A549 (cell line): ENCODE measurements at regions of chr11 and their contacts with region 1.

Region 1: GRCh38 chr11:3854977-3855807 is at the start of gene STIM1:
- DNase-seq: peak; percentile 82 to 94
- ATAC-seq: peak; percentile 86 to 91
- H3K4me3 ChIP-seq: peak within 1 kb of the TSS; percentile 98
- H3K27ac ChIP-seq: peak within 1 kb of the TSS; percentile 98 to 99
- H3K4me1 ChIP-seq: peaks cover 49% of the 10 kb centered on the region
- CTCF ChIP-seq: peak; percentile 91
- EP300 ChIP-seq: no peak
- POLR2A ChIP-seq: peak; percentile 69
- RAD21 ChIP-seq: peak; percentile 73 to 85
- polyA plus RNA-seq, gene STIM1: 38.7 and 42.5 TPM in 2 replicates

Region 2: DNA sequence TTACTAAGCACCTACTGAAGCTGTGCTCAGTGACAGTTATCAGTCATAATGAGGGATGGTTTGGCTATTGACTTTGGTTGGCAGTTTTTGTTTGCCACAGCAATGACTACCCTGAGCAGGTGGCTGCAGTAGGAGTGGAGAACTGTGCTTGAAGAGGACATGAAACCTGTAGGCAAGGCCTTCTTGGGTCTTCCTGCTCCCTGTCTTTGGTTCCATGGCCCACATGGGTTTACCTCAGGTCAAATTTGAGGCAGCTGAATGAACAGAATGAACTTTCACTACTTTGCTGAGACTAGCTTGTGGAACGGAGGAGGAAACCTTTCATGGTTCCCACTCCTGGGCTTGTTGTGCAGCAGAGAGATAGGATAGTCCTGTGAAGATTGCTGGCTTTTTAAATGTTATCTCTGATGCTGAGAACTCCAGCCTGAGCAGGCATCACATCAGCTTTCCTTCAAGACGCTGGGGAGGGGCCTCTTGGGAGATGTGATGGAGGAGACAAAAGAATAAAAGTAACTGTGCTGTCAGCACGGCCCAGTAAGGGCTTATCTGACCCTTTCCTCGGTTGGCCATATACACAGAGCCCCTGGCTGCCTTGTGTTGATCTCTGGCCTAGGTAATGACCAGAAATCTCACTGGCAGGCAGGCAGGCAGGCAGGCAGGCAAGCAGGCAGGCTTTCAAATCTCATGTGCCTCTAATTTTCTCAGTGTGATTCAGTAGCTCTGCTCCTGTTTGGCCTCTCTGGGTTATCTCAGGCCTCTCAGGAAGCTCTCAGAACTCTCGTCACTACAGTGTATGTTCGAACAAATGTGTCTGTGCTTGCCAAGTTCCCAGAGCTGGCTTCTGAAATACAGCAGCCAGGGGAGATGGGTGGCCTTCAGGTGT is 12.3 kb after region 1 on chr11:
- CTCF ChIA-PET with region 1: interaction called, 46 read pairs
- POLR2A ChIA-PET with region 1: interaction called, 4 read pairs
- DNase-seq: no peak
- ATAC-seq: no peak
- H3K4me3 ChIP-seq: no peak overlapping the region
- H3K27ac ChIP-seq: no peak overlapping the region; a peak in 1 of 6 replicates
- H3K4me1 ChIP-seq: peaks cover 15% of the 10 kb centered on the region
- CTCF ChIP-seq: no peak
- EP300 ChIP-seq: no peak
- POLR2A ChIP-seq: no peak
- RAD21 ChIP-seq: no peak

Region 3: DNA sequence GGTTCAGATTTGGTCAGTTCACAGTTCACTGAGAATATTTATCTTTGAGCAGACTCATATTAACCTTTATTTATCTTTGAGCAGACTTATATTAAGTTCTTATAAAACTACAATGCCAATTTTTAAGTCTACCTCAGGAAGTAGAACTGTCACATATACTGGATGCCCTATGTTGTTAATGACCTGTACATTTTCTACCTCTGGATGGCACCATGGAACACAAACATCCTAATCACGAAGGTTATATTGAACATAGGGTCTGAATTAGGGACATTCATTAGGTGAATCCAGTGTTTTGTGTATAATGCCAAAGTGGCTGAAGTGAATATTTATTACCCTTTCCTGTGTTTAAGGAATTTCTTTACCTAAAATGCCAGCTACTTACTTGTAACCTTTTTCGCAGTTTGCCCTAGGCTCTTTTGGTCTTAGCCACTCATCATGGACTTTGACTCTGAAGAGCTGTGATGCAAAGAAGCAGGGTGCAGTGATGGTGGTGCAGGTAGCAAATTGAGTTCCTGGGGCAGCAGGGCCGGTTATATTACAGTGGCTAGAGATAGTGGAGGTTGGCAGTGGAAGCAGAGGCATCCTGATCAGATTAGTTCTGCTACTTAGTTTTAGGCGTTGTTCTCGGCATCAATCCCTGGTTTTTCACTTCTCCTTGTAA is 72.1 kb after region 1 on chr11:
- CTCF ChIA-PET with region 1: interaction called, 12 read pairs
- POLR2A ChIA-PET with region 1: no interaction called
- DNase-seq: no peak
- ATAC-seq: peak in 1 of 2 experiments; percentile 39; a peak in 1 of 6 replicates
- H3K4me3 ChIP-seq: no peak overlapping the region
- H3K27ac ChIP-seq: no peak overlapping the region
- H3K4me1 ChIP-seq: peaks cover 9% of the 10 kb centered on the region; the same call in 2 of the 3 replicates
- CTCF ChIP-seq: 0 out of 3 replicates have a peak, but pooled peaks have one; percentile 9
- EP300 ChIP-seq: no peak
- POLR2A ChIP-seq: no peak
- RAD21 ChIP-seq: no peak; a peak in 1 of 5 replicates

Region 4: GRCh38 chr11:3969613-3970012 is 114.4 kb after region 1 on chr11:
- CTCF ChIA-PET with region 1: interaction called, 29 read pairs
- POLR2A ChIA-PET with region 1: interaction called, 3 read pairs
- DNase-seq: no peak
- ATAC-seq: no peak
- H3K4me3 ChIP-seq: no peak overlapping the region
- H3K27ac ChIP-seq: no peak overlapping the region
- H3K4me1 ChIP-seq: no peaks in the 10 kb centered on the region
- CTCF ChIP-seq: no peak
- EP300 ChIP-seq: no peak
- POLR2A ChIP-seq: no peak
- RAD21 ChIP-seq: no peak

Region 5: GRCh38 chr11:4072668-4073285 is 217.6 kb after region 1 on chr11:
- CTCF ChIA-PET with region 1: interaction called, 919 read pairs
- POLR2A ChIA-PET with region 1: interaction called, 24 read pairs
- DNase-seq: peak; percentile 67 to 80
- ATAC-seq: peak; percentile 90 to 97
- H3K4me3 ChIP-seq: no peak overlapping the region
- H3K27ac ChIP-seq: no peak overlapping the region
- H3K4me1 ChIP-seq: no peaks in the 10 kb centered on the region
- CTCF ChIP-seq: peak; percentile 93
- EP300 ChIP-seq: no peak
- POLR2A ChIP-seq: no peak
- RAD21 ChIP-seq: peak; percentile 96 to 98

Region 6: GRCh38 chr11:4118107-4118506 is 262.9 kb after region 1 on chr11:
- CTCF ChIA-PET with region 1: no interaction called
- POLR2A ChIA-PET with region 1: no interaction called
- DNase-seq: no peak
- ATAC-seq: no peak
- H3K4me3 ChIP-seq: no peak overlapping the region
- H3K27ac ChIP-seq: no peak overlapping the region
- H3K4me1 ChIP-seq: no peaks in the 10 kb centered on the region
- CTCF ChIP-seq: no peak
- EP300 ChIP-seq: no peak
- POLR2A ChIP-seq: no peak
- RAD21 ChIP-seq: no peak